Activated T-helper 2 cell treated with anti-CD3 and anti-CD28 coated beads, Interferon-gamma antibody, Interleukin-2, Interleukin-4, amounts not matched to agents 10 μg/mL and 5 μg/mL and 100 μg/mL, durations not matched to agents 14 hours and 24 hours and 36 hours (primary cell): ENCODE measurements at regions of chr2 and their contacts with region 1.

Region 1: GRCh38 chr2:136310005-136310495 is 192.1 kb upstream of the CXCR4 start:
- DNase-seq: no peak
- H3K4me3 Mint-ChIP-seq: peak overlapping the region; percentile 41
- H3K27ac Mint-ChIP-seq: peak overlapping the region; percentile 94
- H3K4me1 Mint-ChIP-seq: peaks cover 47% of the 10 kb centered on the region
- H3K27me3 Mint-ChIP-seq: no peaks in the 10 kb centered on the region

Region 2: GRCh38 chr2:135913727-135914365 is 396.2 kb before region 1 on chr2:
- intact Hi-C with region 1: loop called (anchors 5 kb)
- DNase-seq: no peak
- H3K4me3 Mint-ChIP-seq: no peak overlapping the region
- H3K27ac Mint-ChIP-seq: peak overlapping the region; percentile 76
- H3K4me1 Mint-ChIP-seq: peaks cover 14% of the 10 kb centered on the region
- H3K27me3 Mint-ChIP-seq: no peaks in the 10 kb centered on the region

Region 3: DNA sequence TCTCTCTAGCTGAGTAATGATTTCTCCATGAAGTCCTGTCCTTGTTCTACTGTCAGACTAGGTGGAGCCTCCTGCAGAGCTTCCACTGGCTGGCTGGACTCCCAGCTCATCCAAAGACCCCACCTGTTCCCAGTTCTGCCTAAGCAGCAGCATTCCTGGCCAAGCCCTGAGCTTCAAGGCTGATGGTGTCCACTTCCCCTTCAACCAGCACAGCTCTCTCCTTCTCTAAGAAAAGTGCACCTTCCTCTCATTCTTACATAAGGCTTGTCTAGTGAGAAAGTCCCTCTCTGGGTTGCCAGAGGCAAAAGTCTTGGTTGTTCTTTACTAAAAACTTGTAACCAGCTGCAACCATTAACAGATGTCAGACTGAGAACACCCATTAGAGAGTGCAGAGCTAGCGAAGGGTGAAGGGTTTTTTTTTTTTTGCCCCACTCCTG is 251.0 kb before region 1 on chr2:
- intact Hi-C with region 1: loop called (anchors 1 kb)
- DNase-seq: no peak
- H3K4me3 Mint-ChIP-seq: no peak overlapping the region
- H3K27ac Mint-ChIP-seq: peak overlapping the region; percentile 5
- H3K4me1 Mint-ChIP-seq: peaks cover 56% of the 10 kb centered on the region
- H3K27me3 Mint-ChIP-seq: no peaks in the 10 kb centered on the region

Region 4: GRCh38 chr2:136162438-136162837 is 147.6 kb before region 1 on chr2:
- intact Hi-C with region 1: no loop called
- DNase-seq: no peak
- H3K4me3 Mint-ChIP-seq: no peak overlapping the region
- H3K27ac Mint-ChIP-seq: no peak overlapping the region
- H3K4me1 Mint-ChIP-seq: peaks cover 4% of the 10 kb centered on the region
- H3K27me3 Mint-ChIP-seq: peaks cover 6% of the 10 kb centered on the region

Region 5: GRCh38 chr2:136238286-136239078 is 71.6 kb before region 1 on chr2:
- intact Hi-C with region 1: loop called (anchors 2 kb)
- DNase-seq: peak; percentile 20
- H3K4me3 Mint-ChIP-seq: no peak overlapping the region
- H3K27ac Mint-ChIP-seq: peak overlapping the region; percentile 88
- H3K4me1 Mint-ChIP-seq: peaks cover 53% of the 10 kb centered on the region
- H3K27me3 Mint-ChIP-seq: no peaks in the 10 kb centered on the region

Region 6: DNA sequence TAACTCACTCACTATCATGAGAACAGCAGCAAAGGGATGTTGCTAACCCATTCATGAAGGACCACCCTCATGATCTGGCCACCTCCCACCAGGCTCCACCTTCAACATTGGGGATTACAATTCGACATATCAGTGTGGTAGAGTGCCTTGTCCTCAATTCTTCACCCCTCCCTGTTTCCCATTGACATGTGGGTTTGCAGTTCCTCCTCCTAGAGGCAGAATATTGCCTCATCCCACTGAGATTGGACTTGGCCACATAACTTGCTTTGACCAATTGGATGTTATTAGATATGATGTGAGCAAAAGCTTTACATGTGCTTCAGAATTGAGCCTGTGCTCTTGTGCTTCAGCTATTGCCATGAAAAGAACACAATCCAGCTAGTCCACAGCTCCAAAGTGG is 24.9 kb after region 1 on chr2:
- intact Hi-C with region 1: no loop called
- DNase-seq: no peak
- H3K4me3 Mint-ChIP-seq: no peak overlapping the region
- H3K27ac Mint-ChIP-seq: no peak overlapping the region
- H3K4me1 Mint-ChIP-seq: peaks cover 6% of the 10 kb centered on the region
- H3K27me3 Mint-ChIP-seq: no peaks in the 10 kb centered on the region

Region 7: DNA sequence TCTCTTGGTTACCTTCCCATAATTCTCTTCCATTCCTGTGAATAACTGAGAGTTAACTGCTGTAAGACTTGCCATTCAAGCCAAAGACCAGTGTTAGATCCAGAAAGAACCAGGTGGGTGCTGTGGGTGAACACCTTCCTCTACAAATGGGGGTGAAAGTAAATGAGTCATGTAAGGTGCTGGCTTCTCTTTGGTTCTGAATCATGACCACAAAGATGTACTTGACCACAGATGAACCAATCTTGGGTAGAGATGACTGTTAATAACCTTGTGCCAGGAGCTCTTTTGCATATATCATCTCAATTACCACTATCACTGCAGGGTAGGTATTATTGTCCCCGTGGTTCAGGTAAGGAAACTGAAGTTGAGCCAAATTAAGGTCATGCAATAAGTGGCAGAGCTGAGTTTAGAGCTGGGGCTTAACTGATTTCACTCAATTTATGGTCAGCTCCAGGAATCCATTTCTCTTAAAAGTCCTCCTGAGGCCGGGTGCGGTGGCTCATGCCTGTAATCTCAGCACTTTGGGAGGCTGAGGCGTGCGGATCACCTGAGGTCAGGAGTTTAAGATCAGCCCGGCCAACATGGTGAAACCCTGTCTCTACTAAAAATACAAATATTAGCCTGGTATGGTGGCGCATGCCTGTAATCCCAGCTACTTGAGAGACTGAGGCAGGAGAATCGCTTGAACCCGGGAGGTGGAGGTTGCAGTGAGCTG is 52.8 kb after region 1 on chr2:
- intact Hi-C with region 1: loop called (anchors 1 kb)
- DNase-seq: no peak
- H3K4me3 Mint-ChIP-seq: peak overlapping the region; percentile 2
- H3K27ac Mint-ChIP-seq: peak overlapping the region; percentile 35
- H3K4me1 Mint-ChIP-seq: peaks cover 49% of the 10 kb centered on the region
- H3K27me3 Mint-ChIP-seq: peaks cover 1% of the 10 kb centered on the region

Region 8: GRCh38 chr2:137096693-137097092 is 786.6 kb after region 1 on chr2:
- intact Hi-C with region 1: no loop called
- DNase-seq: no peak
- H3K4me3 Mint-ChIP-seq: no peak overlapping the region
- H3K27ac Mint-ChIP-seq: no peak overlapping the region
- H3K4me1 Mint-ChIP-seq: no peaks in the 10 kb centered on the region
- H3K27me3 Mint-ChIP-seq: no peaks in the 10 kb centered on the region